Dendritic cell treated with granulocyte-macrophage colony-stimulating factor and Interleukin-4, amounts not matched to agents 40 ng/mL and 50 ng/mL, for 4 days (primary cell): ENCODE measurements at regions of chr10 and their contacts with region 1.

Region 1: GRCh38 chr10:101067356-101068083 is 5.7 kb downstream of the KAZALD1 start:
- H3K4me3 Mint-ChIP-seq: peak overlapping the region; percentile 79
- H3K27ac Mint-ChIP-seq: peak overlapping the region; percentile 40
- H3K4me1 Mint-ChIP-seq: peaks cover 90% of the 10 kb centered on the region
- H3K27me3 Mint-ChIP-seq: peaks cover 50% of the 10 kb centered on the region

Region 2: GRCh38 chr10:99382181-99382580 is 1685.3 kb before region 1 on chr10:
- intact Hi-C with region 1: no loop called
- H3K4me3 Mint-ChIP-seq: no peak overlapping the region
- H3K27ac Mint-ChIP-seq: no peak overlapping the region
- H3K4me1 Mint-ChIP-seq: peaks cover 6% of the 10 kb centered on the region
- H3K27me3 Mint-ChIP-seq: peaks cover 3% of the 10 kb centered on the region

Region 3: DNA sequence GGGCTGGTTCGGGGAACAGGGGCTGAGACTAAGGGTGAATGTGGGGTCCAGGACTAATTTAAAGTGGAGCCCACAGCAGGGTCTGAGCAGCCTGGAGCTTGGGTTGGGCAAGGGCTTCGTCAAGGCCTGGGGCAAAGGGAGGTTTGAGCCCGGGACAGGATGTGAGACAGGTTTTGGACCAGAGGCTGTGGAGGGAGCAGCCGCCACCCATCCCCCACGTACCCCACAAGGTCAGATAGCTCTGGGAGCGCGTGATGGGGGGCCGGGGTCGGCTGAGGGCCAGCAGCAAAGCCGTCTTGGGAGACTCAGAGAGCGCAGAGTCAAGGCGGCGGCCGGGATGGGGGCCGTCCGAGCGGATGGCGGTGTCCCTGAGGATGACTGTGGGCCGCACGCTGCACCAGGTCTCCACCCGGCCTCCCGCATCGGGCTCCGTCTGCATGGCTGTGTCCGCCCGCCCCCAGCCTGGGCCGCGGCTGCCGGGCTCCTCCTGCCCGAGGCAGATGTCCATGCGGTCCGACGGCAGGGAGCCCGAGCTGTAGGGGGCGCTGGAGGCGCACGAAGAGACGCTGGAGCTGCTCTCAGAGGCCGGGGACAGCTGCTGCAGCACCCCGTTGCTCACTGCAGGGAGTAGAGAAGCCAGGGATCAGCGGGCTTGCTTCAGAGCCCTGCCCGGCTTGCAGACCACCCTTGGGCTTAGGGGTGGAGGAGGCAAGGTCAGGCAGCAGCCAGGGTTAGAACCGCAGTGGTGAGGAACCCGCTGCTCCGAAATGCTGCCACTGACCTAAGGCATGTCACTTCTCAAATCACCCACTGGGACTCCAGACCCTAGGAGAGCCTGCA is 48.7 kb before region 1 on chr10:
- intact Hi-C with region 1: loop called (anchors 2 kb)
- H3K4me3 Mint-ChIP-seq: peak overlapping the region; percentile 41
- H3K27ac Mint-ChIP-seq: peak overlapping the region; percentile 71
- H3K4me1 Mint-ChIP-seq: peaks cover 52% of the 10 kb centered on the region
- H3K27me3 Mint-ChIP-seq: peaks cover 33% of the 10 kb centered on the region

Region 4: GRCh38 chr10:101042667-101043355 is 24.7 kb before region 1 on chr10:
- intact Hi-C with region 1: loop called (anchors 2 kb)
- H3K4me3 Mint-ChIP-seq: peak overlapping the region; percentile 90
- H3K27ac Mint-ChIP-seq: peak overlapping the region; percentile 100
- H3K4me1 Mint-ChIP-seq: peaks cover 35% of the 10 kb centered on the region
- H3K27me3 Mint-ChIP-seq: peaks cover 30% of the 10 kb centered on the region

Region 5: DNA sequence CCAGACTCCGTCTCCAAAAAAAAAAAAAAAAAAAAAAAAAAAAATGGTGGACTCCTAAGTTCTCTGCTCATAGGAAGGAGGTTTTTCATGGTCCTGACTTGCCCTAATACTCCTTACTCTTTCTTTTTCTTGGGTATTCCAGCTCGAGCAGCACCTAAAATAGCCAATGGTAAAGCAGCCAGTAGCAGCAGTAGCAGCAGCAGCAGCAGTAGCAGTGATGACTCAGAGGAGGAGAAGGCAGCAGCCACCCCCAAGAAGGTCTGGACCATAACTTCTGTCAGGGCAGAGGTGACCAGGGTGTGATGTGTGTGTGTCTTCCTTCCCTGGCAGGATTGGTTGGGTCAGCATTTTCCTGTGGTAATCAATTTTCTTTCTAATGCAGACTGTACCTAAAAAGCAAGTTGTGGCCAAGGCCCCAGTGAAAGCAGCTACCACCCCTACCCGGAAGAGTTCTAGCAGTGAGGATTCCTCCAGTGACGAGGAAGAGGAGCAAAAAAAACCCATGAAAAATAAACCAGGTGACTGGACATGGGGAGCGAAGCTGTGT is 1091.6 kb after region 1 on chr10:
- intact Hi-C with region 1: no loop called
- H3K4me3 Mint-ChIP-seq: no peak overlapping the region
- H3K27ac Mint-ChIP-seq: no peak overlapping the region
- H3K4me1 Mint-ChIP-seq: no peaks in the 10 kb centered on the region
- H3K27me3 Mint-ChIP-seq: no peaks in the 10 kb centered on the region